ENCODE measurements at regions of chr1 and their contacts with region 1.

Region 1: GRCh38 chr1:101309334-101310311 is 72.8 kb downstream of the S1PR1 start:
- DNase-seq: peak; percentile 85 to 95 (median 93)
- H3K4me3 ChIP-seq: peak overlapping the region in 6 of 7 experiments; percentile 40 to 71 (median 62)
- H3K27ac ChIP-seq: peak overlapping the region; percentile 18 to 58
- H3K4me1 ChIP-seq: peaks cover 19 to 43% (median 34%) of the 10 kb centered on the region in 4 experiments
- H3K27me3 ChIP-seq: no peaks in the 10 kb centered on the region

Region 2: DNA sequence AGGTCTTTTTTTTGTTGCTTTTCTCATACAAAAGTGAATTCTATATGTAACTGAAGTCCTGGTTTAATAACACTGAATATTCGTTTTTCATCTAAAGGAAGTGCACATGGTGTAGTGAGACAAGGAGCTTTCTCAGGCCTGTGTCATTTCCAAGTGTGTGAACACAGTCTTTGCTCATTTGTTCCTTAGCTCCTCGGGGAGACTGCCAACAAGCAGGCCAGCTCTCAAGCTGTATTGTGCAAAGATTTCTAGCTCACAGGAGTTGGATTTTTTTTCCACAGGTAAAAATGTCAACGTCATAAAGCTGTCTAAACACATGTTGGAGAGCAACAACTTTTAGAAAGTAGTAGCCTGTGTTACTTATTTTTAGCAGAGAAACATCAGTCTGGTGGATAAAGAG is 160.6 kb before region 1 on chr1:
- CTCF ChIA-PET with region 1: no interaction called
- POLR2A ChIA-PET with region 1: no interaction called
- DNase-seq: no peak
- H3K4me3 ChIP-seq: no peak overlapping the region
- H3K27ac ChIP-seq: no peak overlapping the region
- H3K4me1 ChIP-seq: peaks cover 0 to 3% (median 0%) of the 10 kb centered on the region in 4 experiments
- H3K27me3 ChIP-seq: no peaks in the 10 kb centered on the region

Region 3: GRCh38 chr1:101323535-101323934 is 13.9 kb after region 1 on chr1:
- CTCF ChIA-PET with region 1: interaction called, 22 read pairs
- POLR2A ChIA-PET with region 1: no interaction called
- DNase-seq: peak in 1 of 3 donors; percentile 35
- H3K4me3 ChIP-seq: no peak overlapping the region
- H3K27ac ChIP-seq: no peak overlapping the region
- H3K4me1 ChIP-seq: peaks cover 0 to 7% (median under 1%) of the 10 kb centered on the region in 4 experiments
- H3K27me3 ChIP-seq: no peaks in the 10 kb centered on the region

Region 4: DNA sequence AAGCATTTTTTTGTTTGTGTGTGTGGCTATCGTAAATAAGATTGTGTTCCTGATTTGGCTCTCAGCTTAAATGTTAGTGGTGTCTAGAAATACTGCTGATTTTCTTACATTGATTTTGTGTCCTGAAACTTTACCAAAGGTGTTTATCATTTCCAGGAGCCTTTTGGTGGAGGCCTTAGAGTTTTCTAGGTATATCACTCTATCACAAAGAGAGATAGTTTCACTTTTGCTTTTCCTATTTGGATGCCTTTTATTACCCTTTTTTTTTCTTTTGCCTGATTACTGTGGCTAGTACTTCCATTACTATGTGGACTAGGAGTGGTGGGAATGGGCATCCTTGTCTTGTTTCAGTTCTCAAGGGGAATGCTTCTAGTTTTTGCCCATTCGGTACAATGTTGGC is 36.8 kb after region 1 on chr1:
- CTCF ChIA-PET with region 1: interaction called, 37 read pairs
- POLR2A ChIA-PET with region 1: interaction called, 3 read pairs
- DNase-seq: peak in 1 of 3 donors; percentile 5
- H3K4me3 ChIP-seq: no peak overlapping the region
- H3K27ac ChIP-seq: no peak overlapping the region
- H3K4me1 ChIP-seq: no peaks in the 10 kb centered on the region
- H3K27me3 ChIP-seq: no peaks in the 10 kb centered on the region

Region 5: GRCh38 chr1:101394041-101394440 is 84.4 kb after region 1 on chr1:
- CTCF ChIA-PET with region 1: no interaction called
- POLR2A ChIA-PET with region 1: no interaction called
- DNase-seq: no peak
- H3K4me3 ChIP-seq: no peak overlapping the region
- H3K27ac ChIP-seq: no peak overlapping the region
- H3K4me1 ChIP-seq: peaks cover 0 to 2% (median under 1%) of the 10 kb centered on the region in 4 experiments
- H3K27me3 ChIP-seq: no peaks in the 10 kb centered on the region

Region 6: DNA sequence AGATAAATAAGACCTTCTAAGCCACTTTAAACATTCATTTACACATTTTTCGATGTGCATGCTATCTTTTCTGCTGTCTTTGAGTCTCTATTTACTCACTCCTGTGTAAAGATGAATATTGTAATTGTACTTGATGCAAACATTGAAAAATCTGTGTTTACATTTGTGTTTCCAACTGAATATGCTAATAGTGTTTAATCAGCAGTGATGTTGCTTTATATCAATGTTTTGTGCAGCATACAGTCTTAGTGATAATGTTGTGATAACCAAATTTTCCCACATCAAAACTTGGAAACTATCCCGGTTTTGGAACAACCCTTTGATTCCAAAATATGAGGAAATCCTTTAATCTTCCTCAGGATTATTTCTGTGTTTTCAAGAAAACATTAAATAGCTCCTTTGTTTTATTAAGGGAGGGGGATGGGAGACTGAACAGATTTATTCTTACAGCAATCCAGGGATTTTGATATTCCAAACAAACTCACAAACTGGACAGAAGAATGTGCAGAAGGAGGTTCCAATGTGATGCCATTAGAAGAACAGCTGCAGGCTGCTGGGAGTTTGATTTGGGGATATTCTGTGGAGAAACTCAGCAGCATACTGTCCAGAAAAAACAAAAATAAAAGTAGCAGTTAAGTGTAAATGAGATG is 175.2 kb after region 1 on chr1:
- CTCF ChIA-PET with region 1: no interaction called
- POLR2A ChIA-PET with region 1: no interaction called
- DNase-seq: no peak
- H3K4me3 ChIP-seq: no peak overlapping the region
- H3K27ac ChIP-seq: no peak overlapping the region
- H3K4me1 ChIP-seq: no peaks in the 10 kb centered on the region
- H3K27me3 ChIP-seq: peaks cover 6 to 33% (median 8%) of the 10 kb centered on the region in 5 experiments

Measured in common myeloid progenitor, CD34-positive (primary cell).